ENCODE measurements at regions of chr2 and their contacts with region 1.

Region 1: GRCh38 chr2:189287982-189288521 is 108.5 kb upstream of the COL5A2 start:
- DNase-seq: no peak
- ATAC-seq: peak in 7 of 8 donors; percentile 33 to 83 (median 69)
- H3K4me3 ChIP-seq: no peak overlapping the region
- H3K27ac ChIP-seq: peak overlapping the region in 1 of 10 donors; percentile 59
- H3K4me1 ChIP-seq: peaks cover 0 to 6% (median 0%) of the 10 kb centered on the region in 9 donors
- H3K27me3 ChIP-seq: no peaks in the 10 kb centered on the region
- CTCF ChIP-seq: peak in 7 of 9 donors; percentile 42 to 68 (median 56)

Region 2: GRCh38 chr2:188524519-188525113 is 763.4 kb before region 1 on chr2:
- intact Hi-C with region 1: loop called in 1 of 10 experiments (anchors 5 kb)
- DNase-seq: peak in 1 of 2 donors; percentile 13
- ATAC-seq: no peak
- H3K4me3 ChIP-seq: no peak overlapping the region
- H3K27ac ChIP-seq: no peak overlapping the region
- H3K4me1 ChIP-seq: peaks cover 0 to 14% (median 0%) of the 10 kb centered on the region in 9 donors
- H3K27me3 ChIP-seq: no peaks in the 10 kb centered on the region
- CTCF ChIP-seq: peak; percentile 60 to 92 (median 75)

Region 3: DNA sequence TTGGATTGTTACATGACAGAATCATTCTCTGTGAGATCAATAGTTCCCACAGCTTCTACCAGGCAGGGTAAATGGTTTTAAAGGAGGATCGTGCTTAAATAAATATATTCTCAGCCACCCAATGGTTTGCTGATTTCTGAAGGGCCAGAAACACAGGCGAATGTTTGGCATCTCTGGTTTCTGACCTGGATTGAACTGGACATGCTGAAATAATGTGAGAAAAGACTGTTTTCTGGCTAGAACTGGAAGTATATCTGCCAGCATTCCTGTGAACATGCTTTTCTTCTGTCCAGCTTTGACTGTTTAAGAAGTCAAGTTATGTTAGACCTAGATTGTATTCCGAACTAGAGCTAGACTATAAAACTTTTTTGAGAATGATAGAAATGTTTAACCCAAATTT is 391.0 kb before region 1 on chr2:
- intact Hi-C with region 1: no loop called
- DNase-seq: peak in 1 of 2 donors; percentile 9
- ATAC-seq: peak in 5 of 8 donors; percentile 50 to 83 (median 71)
- H3K4me3 ChIP-seq: no peak overlapping the region
- H3K27ac ChIP-seq: peak overlapping the region in 6 of 10 donors; percentile 2 to 59 (median 32)
- H3K4me1 ChIP-seq: peaks cover 0 to 5% (median 0%) of the 10 kb centered on the region in 9 donors
- H3K27me3 ChIP-seq: no peaks in the 10 kb centered on the region
- CTCF ChIP-seq: no peak

Region 4: GRCh38 chr2:189096769-189097447 is 191.1 kb before region 1 on chr2:
- intact Hi-C with region 1: loop called in 6 of 10 experiments (anchors 5 to 10 kb)
- DNase-seq: no peak
- ATAC-seq: no peak
- H3K4me3 ChIP-seq: no peak overlapping the region
- H3K27ac ChIP-seq: no peak overlapping the region
- H3K4me1 ChIP-seq: peaks cover 0 to 28% (median 9%) of the 10 kb centered on the region in 9 donors
- H3K27me3 ChIP-seq: no peaks in the 10 kb centered on the region
- CTCF ChIP-seq: no peak

Region 5: GRCh38 chr2:189109921-189110397 is 178.1 kb before region 1 on chr2:
- intact Hi-C with region 1: loop called in 5 of 10 experiments (anchors 5 to 10 kb)
- DNase-seq: no peak
- ATAC-seq: no peak
- H3K4me3 ChIP-seq: no peak overlapping the region
- H3K27ac ChIP-seq: no peak overlapping the region
- H3K4me1 ChIP-seq: peaks cover 0 to 5% (median 0%) of the 10 kb centered on the region in 9 donors
- H3K27me3 ChIP-seq: no peaks in the 10 kb centered on the region
- CTCF ChIP-seq: no peak

Region 6: GRCh38 chr2:189115126-189115525 is 172.9 kb before region 1 on chr2:
- intact Hi-C with region 1: loop called in 5 of 10 experiments (anchors 5 to 10 kb)
- DNase-seq: no peak
- ATAC-seq: no peak
- H3K4me3 ChIP-seq: no peak overlapping the region
- H3K27ac ChIP-seq: peak overlapping the region in 1 of 10 donors; percentile 13
- H3K4me1 ChIP-seq: peaks cover 0 to 17% (median 0%) of the 10 kb centered on the region in 9 donors
- H3K27me3 ChIP-seq: no peaks in the 10 kb centered on the region
- CTCF ChIP-seq: peak in 5 of 9 donors; percentile 11 to 49 (median 45)

Region 7: DNA sequence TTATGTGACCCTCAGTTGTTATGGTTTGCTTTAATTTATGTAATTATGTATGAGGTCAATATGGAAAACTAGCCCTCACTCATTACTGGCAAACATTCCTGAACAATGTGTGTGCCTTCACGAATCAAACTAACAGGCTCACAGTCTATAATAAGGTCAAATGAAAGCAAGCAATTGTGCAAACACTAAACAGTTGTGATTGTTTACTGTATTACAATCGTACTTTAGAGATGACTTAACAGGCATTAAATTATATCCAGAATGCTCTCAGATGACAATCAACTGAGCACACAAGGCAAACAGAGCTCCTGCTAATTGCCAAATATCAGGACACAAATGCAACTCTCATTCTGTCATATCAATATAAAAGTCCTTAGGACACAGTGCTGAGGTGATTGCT is 138.0 kb before region 1 on chr2:
- intact Hi-C with region 1: loop called in 1 of 10 experiments (anchors 10 kb)
- DNase-seq: no peak
- ATAC-seq: no peak
- H3K4me3 ChIP-seq: no peak overlapping the region
- H3K27ac ChIP-seq: no peak overlapping the region
- H3K4me1 ChIP-seq: peaks cover 0 to 36% (median 17%) of the 10 kb centered on the region in 9 donors
- H3K27me3 ChIP-seq: no peaks in the 10 kb centered on the region
- CTCF ChIP-seq: no peak

Region 8: GRCh38 chr2:189179570-189179950 is 108.5 kb before region 1 on chr2 and contains the start of gene COL5A2:
- intact Hi-C with region 1: loop called in 1 of 10 experiments (anchors 5 kb)
- DNase-seq: peak in 1 of 2 donors; percentile 50
- ATAC-seq: peak; percentile 44 to 92 (median 88)
- H3K4me3 ChIP-seq: peak within 1 kb of the TSS in 9 of 10 donors; percentile 41 to 63 (median 57)
- H3K27ac ChIP-seq: peak within 1 kb of the TSS; percentile 40 to 83 (median 74)
- H3K4me1 ChIP-seq: peaks cover 0 to 3% (median 0%) of the 10 kb centered on the region in 9 donors
- H3K27me3 ChIP-seq: peaks cover 0 to 3% (median 0%) of the 10 kb centered on the region in 7 donors
- CTCF ChIP-seq: no peak
- total RNA-seq, gene COL5A2: 4.8 to 44.7 (median 7.5) TPM

Region 9: GRCh38 chr2:189210250-189211075 is 77.6 kb before region 1 on chr2:
- intact Hi-C with region 1: no loop called
- DNase-seq: peak in 1 of 2 donors; percentile 43
- ATAC-seq: peak in 7 of 8 donors; percentile 74 to 89 (median 81)
- H3K4me3 ChIP-seq: peak overlapping the region in 7 of 10 donors; percentile 12 to 27 (median 17)
- H3K27ac ChIP-seq: peak overlapping the region; percentile 38 to 86 (median 70)
- H3K4me1 ChIP-seq: peaks cover 0 to 29% (median 5%) of the 10 kb centered on the region in 9 donors
- H3K27me3 ChIP-seq: no peaks in the 10 kb centered on the region
- CTCF ChIP-seq: no peak

Measured in heart right ventricle (tissue), 16 donors.